Activated CD8-positive, alpha-beta memory T cell treated with anti-CD3 and anti-CD28 coated beads, Interleukin-2, amount 10 ng/mL, durations not matched to agents 7 days and 5 days (primary cell): ENCODE measurements at regions of chr3 and their contacts with region 1.

Region 1: DNA sequence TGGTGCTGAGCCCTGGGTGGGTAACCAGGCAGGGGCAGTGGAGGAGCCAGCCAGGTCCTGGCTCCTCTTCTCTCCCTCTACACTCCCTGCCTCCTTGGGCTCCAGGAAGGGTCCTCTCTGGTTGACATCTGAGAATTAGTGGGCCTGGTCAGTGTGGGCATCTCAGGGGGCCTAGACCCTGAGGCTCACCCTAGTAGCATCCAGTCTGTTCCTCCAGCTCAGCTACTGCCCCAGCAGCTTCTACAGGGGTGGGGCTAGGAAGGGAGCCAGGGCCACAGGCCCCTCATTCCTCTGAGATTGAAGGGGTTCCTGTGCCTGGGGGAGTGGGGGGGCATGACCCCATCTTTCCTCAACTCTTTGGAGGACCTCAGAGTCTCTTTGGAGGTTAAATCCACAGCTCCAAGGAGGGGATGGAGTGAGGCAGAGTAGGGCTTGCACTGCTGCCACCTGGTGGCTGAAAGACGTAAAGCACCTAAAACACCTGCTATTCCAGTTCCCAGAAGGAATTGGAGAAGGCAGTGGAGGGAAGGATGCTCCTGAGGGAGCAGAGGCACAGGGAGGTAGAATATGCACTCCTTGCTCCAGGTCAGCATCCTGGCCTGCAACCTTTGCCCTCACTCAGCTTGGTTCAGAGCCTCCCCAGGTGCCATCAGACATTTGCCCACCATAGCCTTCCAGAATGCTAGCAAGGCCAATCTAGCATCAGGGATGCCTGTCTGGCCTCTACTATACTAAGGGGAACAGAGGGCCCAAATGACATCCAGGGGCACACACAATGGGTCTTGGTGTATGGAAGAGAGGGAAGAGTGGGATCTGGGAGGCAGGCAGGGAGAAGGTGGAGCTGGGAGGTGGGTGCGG is 25.1 kb downstream of the C3orf18 start:
- DNase-seq: peak; percentile 64
- ATAC-seq: peak; percentile 74
- H3K4me3 Mint-ChIP-seq: no peak overlapping the region
- H3K27ac Mint-ChIP-seq: no peak overlapping the region
- H3K4me1 Mint-ChIP-seq: no peaks in the 10 kb centered on the region
- H3K27me3 Mint-ChIP-seq: peaks cover 21% of the 10 kb centered on the region

Region 2: GRCh38 chr3:50272911-50273693 is 269.3 kb before region 1 on chr3:
- CTCF ChIA-PET with region 1: no interaction called
- DNase-seq: peak; percentile 92
- ATAC-seq: peak; percentile 89
- H3K4me3 Mint-ChIP-seq: peak overlapping the region; percentile 58
- H3K27ac Mint-ChIP-seq: no peak overlapping the region
- H3K4me1 Mint-ChIP-seq: peaks cover 32% of the 10 kb centered on the region
- H3K27me3 Mint-ChIP-seq: peaks cover 54% of the 10 kb centered on the region

Region 3: GRCh38 chr3:50350527-50351322 is 191.7 kb before region 1 on chr3 and contains the starts of genes CYB561D2 and NPRL2:
- CTCF ChIA-PET with region 1: interaction called, 64 read pairs
- DNase-seq: peak; percentile 100
- ATAC-seq: peak; percentile 92
- H3K4me3 Mint-ChIP-seq: peak within 1 kb of the TSS; percentile 93
- H3K27ac Mint-ChIP-seq: peak within 1 kb of the TSS; percentile 97
- H3K4me1 Mint-ChIP-seq: peaks cover 63% of the 10 kb centered on the region
- H3K27me3 Mint-ChIP-seq: no peaks in the 10 kb centered on the region
- total RNA-seq, gene CYB561D2: 35.1 to 37.7 TPM
- total RNA-seq, gene NPRL2: 45.3 to 49.7 TPM

Region 4: DNA sequence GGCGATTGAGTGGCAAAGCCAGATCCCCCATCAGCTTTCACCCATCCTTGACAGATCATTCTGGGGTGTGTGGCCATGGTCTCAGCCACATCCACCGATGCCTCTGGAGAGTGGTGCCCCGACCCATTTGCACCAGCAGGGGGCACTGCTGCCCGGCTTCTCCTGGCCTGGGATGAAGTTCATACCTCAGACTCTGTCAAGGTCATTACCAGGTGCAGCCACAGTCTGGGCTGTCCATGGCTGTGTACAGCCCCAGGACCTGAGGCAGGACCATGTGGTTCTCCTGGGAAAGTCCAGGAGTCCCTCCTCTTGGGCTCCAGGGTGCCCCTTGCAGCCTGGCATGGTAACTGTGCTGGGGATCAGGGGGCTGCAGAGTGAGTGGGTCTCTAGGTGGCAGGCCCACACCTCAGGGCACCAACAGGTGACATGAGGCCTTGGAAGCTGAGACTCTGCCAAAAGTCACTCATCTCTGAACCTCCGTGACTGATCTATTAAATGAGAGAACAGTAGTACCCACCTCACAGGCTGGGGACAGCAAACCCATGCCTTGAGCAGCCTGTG is 106.2 kb before region 1 on chr3:
- CTCF ChIA-PET with region 1: interaction called, 79 read pairs
- DNase-seq: peak; percentile 85
- ATAC-seq: peak; percentile 97
- H3K4me3 Mint-ChIP-seq: no peak overlapping the region
- H3K27ac Mint-ChIP-seq: no peak overlapping the region
- H3K4me1 Mint-ChIP-seq: no peaks in the 10 kb centered on the region
- H3K27me3 Mint-ChIP-seq: no peaks in the 10 kb centered on the region

Region 5: DNA sequence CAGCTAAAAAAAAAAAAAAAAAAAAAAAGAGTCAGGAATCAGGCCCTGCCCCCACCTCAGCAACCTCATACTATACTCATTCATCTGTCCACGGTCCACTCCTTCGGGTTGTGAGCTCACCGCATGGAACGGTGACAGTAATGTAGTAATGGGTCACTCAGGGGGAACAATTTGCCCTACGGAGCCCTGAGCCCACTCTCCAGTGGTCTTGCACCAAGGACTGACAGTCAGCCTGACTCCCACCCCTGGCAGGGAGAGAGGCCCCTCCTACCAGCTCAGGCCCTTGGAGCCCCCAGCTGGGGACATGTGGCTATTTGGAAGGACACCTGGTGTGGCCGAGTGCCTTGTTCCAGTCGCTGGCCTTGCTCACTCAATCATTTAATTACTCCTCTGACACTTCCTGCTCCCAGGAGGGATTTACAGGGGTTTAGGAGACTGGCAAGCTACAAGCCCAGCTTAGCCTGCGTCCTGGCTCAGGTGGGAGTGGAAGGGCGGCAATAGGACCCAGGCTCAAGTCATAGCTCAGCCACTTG is 19.1 kb before region 1 on chr3:
- CTCF ChIA-PET with region 1: interaction called, 33 read pairs
- DNase-seq: no peak
- ATAC-seq: no peak
- H3K4me3 Mint-ChIP-seq: no peak overlapping the region
- H3K27ac Mint-ChIP-seq: no peak overlapping the region
- H3K4me1 Mint-ChIP-seq: peaks cover 14% of the 10 kb centered on the region
- H3K27me3 Mint-ChIP-seq: peaks cover 4% of the 10 kb centered on the region

Region 6: DNA sequence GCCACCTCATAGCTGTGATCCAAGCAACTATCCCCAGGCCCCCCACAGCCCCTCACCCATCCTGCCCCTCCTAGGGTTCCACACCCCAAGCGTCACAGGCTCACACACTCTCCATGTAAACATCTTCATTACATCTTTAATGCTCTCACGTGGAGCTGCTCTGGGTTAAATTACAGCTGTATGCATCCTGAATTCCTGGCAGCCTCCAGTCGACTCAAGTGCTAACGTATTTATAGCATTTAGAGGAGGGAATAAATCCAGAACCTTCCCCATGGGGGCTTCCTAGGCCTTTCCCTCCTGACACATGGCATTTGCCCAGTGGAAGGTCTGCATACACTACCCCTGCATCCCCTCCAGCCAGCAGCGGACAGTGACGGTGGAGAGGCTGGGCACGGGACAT is 15.5 kb after region 1 on chr3:
- CTCF ChIA-PET with region 1: interaction called, 22 read pairs
- DNase-seq: no peak
- ATAC-seq: no peak
- H3K4me3 Mint-ChIP-seq: no peak overlapping the region
- H3K27ac Mint-ChIP-seq: no peak overlapping the region
- H3K4me1 Mint-ChIP-seq: peaks cover 7% of the 10 kb centered on the region
- H3K27me3 Mint-ChIP-seq: no peaks in the 10 kb centered on the region

Region 7: DNA sequence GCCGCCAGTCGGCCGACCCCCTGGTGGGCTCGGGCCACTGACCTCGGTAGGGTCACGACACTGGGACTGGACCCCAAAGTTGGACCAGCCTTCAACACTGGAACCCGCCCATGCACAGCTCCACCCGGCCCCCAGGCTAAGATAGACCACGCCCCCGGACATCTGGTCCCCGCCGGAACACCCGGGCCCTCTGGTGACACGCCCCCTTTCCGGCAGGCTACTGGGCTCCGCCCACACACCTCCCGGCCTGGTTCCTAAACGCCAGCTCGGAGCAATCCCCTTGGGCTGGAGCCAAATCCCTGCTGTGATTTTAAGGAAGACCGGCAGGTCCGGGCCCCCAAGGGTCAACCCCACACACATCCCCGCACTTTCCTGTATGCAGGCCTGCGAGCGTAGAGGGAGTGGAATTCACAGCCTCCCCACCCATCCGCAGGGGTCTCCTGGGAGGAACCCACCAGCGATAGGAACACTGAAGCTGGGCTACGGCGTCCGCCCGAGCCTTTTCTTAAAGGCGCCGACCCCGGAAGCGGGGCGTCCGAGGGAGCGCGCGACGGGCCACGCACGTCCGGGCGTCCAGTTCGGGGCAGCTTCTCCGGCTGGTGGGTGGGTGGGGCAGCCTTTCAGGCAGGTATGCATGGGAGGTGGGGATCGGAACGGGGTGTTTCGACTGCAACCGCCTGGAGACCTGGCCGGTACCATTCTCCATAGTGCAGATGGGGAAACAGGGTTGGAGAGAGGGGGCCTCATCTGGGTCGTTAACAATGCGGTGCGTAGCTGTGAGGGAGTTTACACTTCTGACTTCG is 26.7 kb after region 1 on chr3 and contains the start of gene HEMK1:
- CTCF ChIA-PET with region 1: interaction called, 14 read pairs
- DNase-seq: peak; percentile 98
- ATAC-seq: peak; percentile 54
- H3K4me3 Mint-ChIP-seq: peak within 1 kb of the TSS; percentile 89
- H3K27ac Mint-ChIP-seq: peak within 1 kb of the TSS; percentile 95
- H3K4me1 Mint-ChIP-seq: peaks cover 57% of the 10 kb centered on the region
- H3K27me3 Mint-ChIP-seq: peaks cover 2% of the 10 kb centered on the region
- total RNA-seq, gene HEMK1: 49.9 to 61.3 TPM